ENCODE measurements at regions of chr6 and their contacts with region 1.

Region 1: GRCh38 chr6:80605165-80605989 is 498.9 kb downstream of the BCKDHB start:
- DNase-seq: no peak
- ATAC-seq: no peak

Region 2: GRCh38 chr6:80133020-80133419 is 472.4 kb before region 1 on chr6:
- intact Hi-C with region 1: loop called (anchors 10 kb)
- DNase-seq: no peak
- ATAC-seq: peak; percentile 52

Region 3: DNA sequence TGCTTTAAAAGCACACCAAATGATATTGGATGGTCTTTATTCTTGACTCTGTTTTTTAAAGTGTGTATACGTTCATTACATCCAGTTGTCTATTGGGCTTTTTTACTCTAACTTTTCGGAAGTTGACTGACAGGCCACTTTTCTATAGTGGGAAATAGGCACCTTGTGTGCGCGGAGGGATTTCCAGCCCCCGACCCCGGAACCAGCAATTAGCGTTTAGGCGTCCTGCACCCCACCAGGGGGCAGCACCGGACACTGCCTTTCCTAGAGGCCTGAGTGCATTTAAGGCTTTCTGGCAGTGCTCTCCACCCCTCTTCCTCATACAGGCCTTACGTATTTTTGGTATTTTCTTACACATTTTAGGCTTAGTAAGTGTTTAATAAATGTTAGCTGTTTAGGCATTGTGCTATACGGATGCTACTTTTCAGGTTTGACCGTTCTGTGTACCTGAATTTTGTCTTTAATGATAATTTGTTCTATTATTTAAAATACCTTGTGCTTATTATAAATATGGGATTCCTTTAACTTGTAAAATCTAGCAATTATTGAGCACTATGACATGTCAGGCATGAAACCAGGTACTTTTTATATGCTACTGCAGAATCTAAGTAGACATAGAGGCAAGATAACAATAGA is 267.1 kb before region 1 on chr6:
- intact Hi-C with region 1: loop called (anchors 10 kb)
- DNase-seq: peak; percentile 72
- ATAC-seq: peak; percentile 59

Region 4: DNA sequence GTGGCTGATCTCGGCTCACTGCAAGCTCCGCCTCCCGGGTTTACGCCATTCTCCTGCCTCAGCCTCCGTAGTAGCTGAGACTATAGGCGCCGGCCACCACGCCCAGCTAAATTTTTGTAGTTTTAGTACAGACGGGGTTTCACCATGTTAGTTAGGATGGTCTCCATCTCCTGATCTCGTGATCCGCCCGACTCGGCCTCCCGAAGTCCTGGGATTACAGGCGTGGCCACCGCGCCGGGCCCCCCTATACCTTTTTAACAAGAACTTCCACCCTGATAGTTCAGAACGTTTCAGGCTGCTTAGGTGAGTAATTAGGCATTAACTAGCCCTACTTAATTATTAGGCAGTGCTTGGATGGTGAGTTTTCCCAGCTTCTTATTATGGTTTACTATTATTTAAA is 53.5 kb after region 1 on chr6:
- intact Hi-C with region 1: no loop called
- DNase-seq: no peak
- ATAC-seq: no peak

Region 5: GRCh38 chr6:80725156-80725930 is 120.0 kb after region 1 on chr6:
- intact Hi-C with region 1: loop called (anchors 10 kb)
- DNase-seq: no peak
- ATAC-seq: no peak

Region 6: GRCh38 chr6:81451787-81452186 is 846.4 kb after region 1 on chr6:
- intact Hi-C with region 1: loop called (anchors 10 kb)
- DNase-seq: no peak
- ATAC-seq: peak; percentile 69

Measured in Right ventricle myocardium inferior (tissue), 1 donor.